ENCODE measurements at regions of chr16 and their contacts with region 1.

Region 1: GRCh38 chr16:30984669-30985400 is at the start of gene HSD3B7:
- DNase-seq: peak; percentile 95
- total RNA-seq, gene HSD3B7: 5.4 TPM

Region 2: GRCh38 chr16:31117391-31118197 is 132.8 kb after region 1 on chr16 and contains the start of gene KAT8:
- intact Hi-C with region 1: no loop called
- DNase-seq: peak; percentile 99
- total RNA-seq, gene KAT8: 56.5 TPM

Region 3: GRCh38 chr16:31142109-31143010 is 157.5 kb after region 1 on chr16:
- intact Hi-C with region 1: loop called (anchors 1 kb)
- DNase-seq: peak; percentile 99

Region 4: GRCh38 chr16:31440516-31441184 is 455.8 kb after region 1 on chr16:
- intact Hi-C with region 1: loop called (anchors 2 kb)
- DNase-seq: no peak

Region 5: GRCh38 chr16:31868691-31869167 is 883.9 kb after region 1 on chr16:
- intact Hi-C with region 1: loop called (anchors 5 kb)
- DNase-seq: no peak